Activated CD8-positive, alpha-beta T cell treated with anti-CD3 and anti-CD28 coated beads, Interleukin-2, amount 10 ng/mL, durations not matched to agents 7 days and 5 days (primary cell): ENCODE measurements at regions of chr4 and their contacts with region 1.

Region 1: GRCh38 chr4:36255577-36255976 is 11.3 kb upstream of the ARAP2 start:
- DNase-seq: peak; percentile 85
- ATAC-seq: peak; percentile 95
- H3K4me3 Mint-ChIP-seq: peak overlapping the region; percentile 72
- H3K27ac Mint-ChIP-seq: peak overlapping the region; percentile 94
- H3K4me1 Mint-ChIP-seq: peaks cover 45% of the 10 kb centered on the region
- H3K27me3 Mint-ChIP-seq: no peaks in the 10 kb centered on the region

Region 2: GRCh38 chr4:36269101-36269500 is 13.5 kb after region 1 on chr4:
- CTCF ChIA-PET with region 1: interaction called, 16 read pairs
- POLR2A ChIA-PET with region 1: interaction called, 5 read pairs
- DNase-seq: peak; percentile 63
- ATAC-seq: peak; percentile 95
- H3K4me3 Mint-ChIP-seq: no peak overlapping the region
- H3K27ac Mint-ChIP-seq: peak overlapping the region; percentile 41
- H3K4me1 Mint-ChIP-seq: peaks cover 40% of the 10 kb centered on the region
- H3K27me3 Mint-ChIP-seq: no peaks in the 10 kb centered on the region

Region 3: DNA sequence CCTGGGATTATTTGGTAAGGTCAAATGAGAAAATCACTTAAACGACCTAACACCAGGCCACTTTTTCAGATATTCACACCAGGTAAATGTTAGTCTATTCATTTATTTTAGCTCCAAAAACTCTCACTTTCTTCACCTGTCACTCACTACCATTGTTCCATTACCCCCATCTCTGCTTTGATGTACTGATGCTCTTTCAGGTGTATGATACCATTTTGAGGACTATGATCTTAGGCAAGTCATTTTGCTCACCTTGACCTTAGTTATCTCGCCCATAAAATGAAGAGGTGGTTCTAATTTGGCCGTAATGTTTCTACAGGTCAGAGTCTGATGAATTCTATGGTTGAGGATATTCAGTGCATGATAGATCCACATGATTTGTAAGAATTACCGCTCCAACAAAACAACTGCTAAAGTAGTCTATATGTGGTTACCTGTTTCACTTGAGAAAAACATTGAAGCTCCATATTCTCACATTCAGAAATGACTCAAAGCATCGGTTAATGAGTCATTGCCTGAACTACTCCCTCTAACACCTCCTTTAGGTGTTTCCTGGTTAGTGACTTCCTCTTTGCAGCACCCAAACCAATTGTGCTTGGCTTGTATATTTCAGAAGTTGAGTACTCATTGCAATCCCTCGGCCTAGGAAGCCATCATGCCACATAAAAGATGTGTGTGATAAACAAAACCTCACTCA is 30.4 kb after region 1 on chr4:
- CTCF ChIA-PET with region 1: interaction called, 16 read pairs
- POLR2A ChIA-PET with region 1: interaction called, 9 read pairs
- DNase-seq: peak; percentile 80
- ATAC-seq: peak; percentile 98
- H3K4me3 Mint-ChIP-seq: peak overlapping the region; percentile 56
- H3K27ac Mint-ChIP-seq: peak overlapping the region; percentile 84
- H3K4me1 Mint-ChIP-seq: peaks cover 47% of the 10 kb centered on the region
- H3K27me3 Mint-ChIP-seq: no peaks in the 10 kb centered on the region

Region 4: DNA sequence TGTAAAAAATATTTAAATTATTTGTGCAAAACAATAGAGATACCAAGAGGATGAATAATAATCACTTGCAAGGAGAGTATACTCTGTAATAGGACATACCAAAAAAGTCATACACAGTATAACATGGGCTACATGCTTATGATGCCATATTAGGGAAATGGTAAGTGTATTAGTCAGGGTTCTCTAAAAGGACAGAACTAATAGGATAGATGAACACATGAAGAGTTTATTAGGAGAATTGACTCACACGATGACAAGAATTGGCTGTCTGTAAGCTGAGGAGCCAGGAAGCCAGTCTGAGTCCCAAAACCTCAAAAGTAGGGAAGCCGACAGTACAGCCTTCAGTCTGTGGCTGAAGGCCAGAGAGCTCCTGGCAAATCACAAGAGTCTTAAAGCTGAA is 177.0 kb after region 1 on chr4:
- CTCF ChIA-PET with region 1: no interaction called
- POLR2A ChIA-PET with region 1: no interaction called
- DNase-seq: no peak
- ATAC-seq: no peak
- H3K4me3 Mint-ChIP-seq: no peak overlapping the region
- H3K27ac Mint-ChIP-seq: no peak overlapping the region
- H3K4me1 Mint-ChIP-seq: no peaks in the 10 kb centered on the region
- H3K27me3 Mint-ChIP-seq: peaks cover 4% of the 10 kb centered on the region